Activated CD4-positive, alpha-beta T cell treated with anti-CD3 and anti-CD28 coated beads for 36 hours (primary cell): ENCODE measurements at regions of chr11 and their contacts with region 1.

Region 1: GRCh38 chr11:108664730-108665525 is at the start of gene DDX10:
- DNase-seq: peak; percentile 99
- ATAC-seq: peak; percentile 99
- H3K4me3 Mint-ChIP-seq: peak within 1 kb of the TSS; percentile 99
- H3K27ac Mint-ChIP-seq: peak within 1 kb of the TSS; percentile 91
- H3K4me1 Mint-ChIP-seq: peaks cover 37% of the 10 kb centered on the region
- H3K27me3 Mint-ChIP-seq: no peaks in the 10 kb centered on the region
- total RNA-seq, gene DDX10: 45.8 to 50.9 TPM

Region 2: GRCh38 chr11:107438148-107438547 is 1226.8 kb before region 1 on chr11:
- CTCF ChIA-PET with region 1: no interaction called
- POLR2A ChIA-PET with region 1: no interaction called
- intact Hi-C with region 1: no loop called
- DNase-seq: no peak
- ATAC-seq: no peak
- H3K4me3 Mint-ChIP-seq: no peak overlapping the region
- H3K27ac Mint-ChIP-seq: no peak overlapping the region
- H3K4me1 Mint-ChIP-seq: peaks cover 6% of the 10 kb centered on the region
- H3K27me3 Mint-ChIP-seq: no peaks in the 10 kb centered on the region

Region 3: DNA sequence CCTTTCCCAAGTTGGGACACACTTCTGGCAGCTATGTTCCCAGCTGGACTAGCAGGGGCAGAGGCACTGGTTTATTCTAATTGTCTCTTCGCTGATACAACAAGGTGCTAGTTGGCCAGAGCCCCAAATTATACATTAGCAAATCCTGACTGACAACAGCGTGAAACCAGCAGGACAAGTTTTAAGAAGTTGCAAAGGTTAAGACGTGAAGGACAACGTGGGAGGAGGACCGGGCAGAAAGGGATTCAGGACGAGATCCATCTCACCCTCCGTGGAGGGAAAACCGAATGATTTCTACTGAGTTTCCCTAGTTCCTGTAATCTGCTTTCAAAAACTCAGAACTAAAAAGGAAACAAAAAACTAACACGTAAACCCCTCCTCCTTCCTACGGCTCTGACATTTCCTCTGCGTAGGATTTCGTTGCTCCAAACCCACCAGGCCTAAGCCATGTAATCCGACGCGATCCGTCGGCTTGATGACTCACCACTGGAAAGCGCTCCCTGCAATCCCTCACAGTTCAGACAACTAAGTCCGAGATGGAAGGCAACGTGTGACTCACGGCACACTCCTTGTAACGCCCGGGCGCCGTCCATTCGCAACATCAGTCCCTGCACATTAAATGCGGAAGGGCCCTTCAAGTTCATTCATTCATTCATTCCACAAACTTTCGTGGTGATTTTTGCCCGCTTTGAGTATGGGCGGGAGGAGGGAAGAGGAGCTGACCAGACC is 167.4 kb before region 1 on chr11:
- CTCF ChIA-PET with region 1: no interaction called
- POLR2A ChIA-PET with region 1: no interaction called
- intact Hi-C with region 1: loop called in 1 of 2 experiments (anchors 1 kb)
- DNase-seq: peak; percentile 85
- ATAC-seq: peak; percentile 91
- H3K4me3 Mint-ChIP-seq: peak overlapping the region; percentile 81
- H3K27ac Mint-ChIP-seq: peak overlapping the region; percentile 91
- H3K4me1 Mint-ChIP-seq: peaks cover 17% of the 10 kb centered on the region
- H3K27me3 Mint-ChIP-seq: no peaks in the 10 kb centered on the region

Region 4: GRCh38 chr11:108593214-108593922 is 71.6 kb before region 1 on chr11 and contains the start of gene EXPH5:
- CTCF ChIA-PET with region 1: no interaction called
- POLR2A ChIA-PET with region 1: no interaction called
- intact Hi-C with region 1: loop called in 1 of 2 experiments (anchors 1 kb)
- DNase-seq: peak; percentile 92
- ATAC-seq: peak; percentile 99
- H3K4me3 Mint-ChIP-seq: peak within 1 kb of the TSS; percentile 94
- H3K27ac Mint-ChIP-seq: peak within 1 kb of the TSS; percentile 98
- H3K4me1 Mint-ChIP-seq: peaks cover 15% of the 10 kb centered on the region
- H3K27me3 Mint-ChIP-seq: peaks cover 21% of the 10 kb centered on the region
- total RNA-seq, gene EXPH5: 2.0 to 2.4 TPM